Lower leg skin (tissue), 4 donors: ENCODE measurements at regions of chr4 and their contacts with region 1.

Region 1: GRCh38 chr4:143498021-143498420 is 15.5 kb upstream of the SMARCA5 start:
- DNase-seq: no peak
- H3K4me3 ChIP-seq: no peak overlapping the region
- CTCF ChIP-seq: no peak
- POLR2A ChIP-seq: no peak

Region 2: GRCh38 chr4:143473334-143474126 is 24.5 kb before region 1 on chr4:
- intact Hi-C with region 1: loop called (anchors 1 kb)
- DNase-seq: no peak
- H3K4me3 ChIP-seq: no peak overlapping the region
- CTCF ChIP-seq: no peak
- POLR2A ChIP-seq: no peak